Mammary epithelial cell (primary cell): ENCODE measurements at regions of chr18 and their contacts with region 1.

Region 1: DNA sequence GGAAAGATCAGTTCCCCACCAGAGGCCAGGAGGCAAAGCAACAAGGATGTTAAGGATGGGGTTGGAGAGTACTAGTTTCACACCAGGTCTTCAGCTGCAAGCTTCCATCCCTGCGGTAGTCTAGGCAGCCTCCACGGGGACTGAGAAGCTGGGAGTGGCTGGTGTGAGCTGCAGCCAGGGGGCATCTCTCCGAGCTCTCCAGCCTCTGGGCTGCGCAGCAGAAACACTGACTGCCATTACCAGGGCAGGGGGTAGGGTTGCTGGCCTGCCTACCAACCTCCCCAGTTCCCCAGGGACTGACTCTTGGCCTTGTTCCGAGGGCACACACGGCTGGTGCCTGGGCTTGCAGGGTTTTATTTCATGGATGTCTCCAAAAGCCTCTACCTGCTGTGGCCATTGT is 15.9 kb downstream of the GATA6 start:
- DNase-seq: no peak
- H3K4me3 ChIP-seq: no peak overlapping the region
- H3K27ac ChIP-seq: no peak overlapping the region
- H3K4me1 ChIP-seq: peaks cover 14% of the 10 kb centered on the region
- H3K27me3 ChIP-seq: no peaks in the 10 kb centered on the region
- CTCF ChIP-seq: no peak

Region 2: DNA sequence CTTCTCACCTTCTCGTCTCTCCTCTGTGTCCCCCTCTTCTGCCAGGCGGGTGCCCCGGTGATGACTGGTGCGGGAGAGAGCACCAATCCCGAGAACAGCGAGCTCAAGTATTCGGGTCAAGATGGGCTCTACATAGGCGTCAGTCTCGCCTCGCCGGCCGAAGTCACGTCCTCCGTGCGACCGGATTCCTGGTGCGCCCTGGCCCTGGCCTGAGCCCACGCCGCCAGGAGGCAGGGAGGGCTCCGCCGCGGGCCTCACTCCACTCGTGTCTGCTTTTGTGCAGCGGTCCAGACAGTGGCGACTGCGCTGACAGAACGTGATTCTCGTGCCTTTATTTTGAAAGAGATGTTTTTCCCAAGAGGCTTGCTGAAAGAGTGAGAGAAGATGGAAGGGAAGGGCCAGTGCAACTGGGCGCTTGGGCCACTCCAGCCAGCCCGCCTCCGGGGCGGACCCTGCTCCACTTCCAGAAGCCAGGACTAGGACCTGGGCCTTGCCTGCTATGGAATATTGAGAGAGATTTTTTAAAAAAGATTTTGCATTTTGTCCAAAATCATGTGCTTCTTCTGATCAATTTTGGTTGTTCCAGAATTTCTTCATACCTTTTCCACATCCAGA is 15.4 kb after region 1 on chr18:
- CTCF ChIA-PET with region 1: no interaction called
- dilution Hi-C with region 1: no loop called
- in situ Hi-C with region 1: no loop called
- intact Hi-C with region 1: loop called (anchors 1 kb)
- DNase-seq: no peak
- H3K4me3 ChIP-seq: no peak overlapping the region
- H3K27ac ChIP-seq: no peak overlapping the region
- H3K4me1 ChIP-seq: no peaks in the 10 kb centered on the region
- H3K27me3 ChIP-seq: no peaks in the 10 kb centered on the region
- CTCF ChIP-seq: no peak

Region 3: DNA sequence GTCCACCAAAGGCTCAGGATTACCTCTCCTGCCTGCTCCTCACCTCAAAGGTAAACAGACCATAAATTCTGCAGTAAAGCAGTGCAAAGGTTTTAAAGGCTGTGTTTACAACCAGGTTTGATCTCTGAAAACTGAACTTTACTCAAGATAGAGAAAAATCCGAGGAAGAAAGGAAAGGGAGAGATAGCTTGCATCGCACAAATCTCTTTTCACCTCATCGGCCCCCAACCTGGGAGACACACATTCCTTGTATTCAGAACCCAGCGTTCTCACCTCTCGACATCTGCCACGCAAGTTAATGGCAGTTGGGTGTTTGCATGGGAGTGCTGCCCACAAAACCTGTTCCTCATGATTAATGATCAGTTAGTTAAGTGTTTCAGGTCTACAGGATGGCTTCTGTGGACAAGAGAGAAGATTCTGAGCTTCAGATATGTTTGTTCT is 56.7 kb after region 1 on chr18:
- CTCF ChIA-PET with region 1: no interaction called
- dilution Hi-C with region 1: no loop called
- in situ Hi-C with region 1: loop called in 1 of 2 experiments (anchors 10 kb)
- intact Hi-C with region 1: no loop called
- DNase-seq: no peak
- H3K4me3 ChIP-seq: no peak overlapping the region
- H3K27ac ChIP-seq: no peak overlapping the region
- H3K4me1 ChIP-seq: no peaks in the 10 kb centered on the region
- H3K27me3 ChIP-seq: peaks cover 2% of the 10 kb centered on the region
- CTCF ChIP-seq: no peak